Dendritic cell treated with granulocyte-macrophage colony-stimulating factor and Interleukin-4, amounts not matched to agents 40 ng/mL and 50 ng/mL, for 4 days (primary cell): ENCODE measurements at regions of chr9 and their contacts with region 1.

Region 1: DNA sequence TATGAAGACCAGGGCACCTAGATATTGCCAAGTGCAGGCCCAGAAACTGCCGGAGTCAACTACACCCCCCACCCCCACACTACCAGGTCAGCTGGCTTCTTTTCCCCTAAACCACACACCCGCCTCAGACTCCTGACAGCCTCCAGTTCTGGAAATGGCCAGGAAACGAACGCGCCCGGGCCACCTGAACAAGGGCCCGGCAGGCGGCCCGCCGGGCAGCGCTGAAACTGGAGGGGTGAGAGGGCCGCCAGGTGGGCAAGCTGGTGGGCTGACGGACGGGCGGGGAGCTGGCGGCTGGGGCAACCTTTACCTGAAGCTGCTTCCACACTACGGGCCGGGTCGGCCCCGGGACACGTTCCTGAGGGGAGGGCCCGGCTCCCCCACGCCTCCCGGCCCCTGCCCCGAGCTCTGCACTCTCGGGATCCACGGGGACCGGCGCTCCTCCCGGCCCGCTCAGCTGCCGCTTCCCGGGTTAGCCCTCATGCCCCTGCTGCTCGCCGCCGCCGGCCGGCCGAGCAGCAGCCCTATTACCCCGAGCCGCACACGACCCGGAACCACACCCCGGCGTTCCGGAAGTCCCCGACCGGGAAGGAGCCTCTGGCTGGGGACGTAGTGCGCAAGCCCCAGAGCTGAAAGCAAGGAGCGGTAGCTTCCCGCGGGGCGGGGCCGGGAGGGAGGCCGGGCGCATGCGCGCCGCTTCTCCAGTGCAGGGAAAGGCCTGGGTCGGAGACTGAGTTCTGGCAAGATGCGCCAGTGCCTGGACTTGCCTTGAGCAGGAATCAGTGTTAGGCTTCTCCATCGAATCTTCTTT is at the start of gene MAPKAP1:
- H3K4me3 Mint-ChIP-seq: peak within 1 kb of the TSS; percentile 86
- H3K27ac Mint-ChIP-seq: peak within 1 kb of the TSS; percentile 90
- H3K4me1 Mint-ChIP-seq: peaks cover 42% of the 10 kb centered on the region
- H3K27me3 Mint-ChIP-seq: no peaks in the 10 kb centered on the region

Region 2: GRCh38 chr9:125746017-125746773 is 39.3 kb after region 1 on chr9:
- intact Hi-C with region 1: loop called (anchors 1 kb)
- H3K4me3 Mint-ChIP-seq: peak overlapping the region; percentile 88
- H3K27ac Mint-ChIP-seq: peak overlapping the region; percentile 88
- H3K4me1 Mint-ChIP-seq: peaks cover 39% of the 10 kb centered on the region
- H3K27me3 Mint-ChIP-seq: peaks cover 7% of the 10 kb centered on the region

Region 3: GRCh38 chr9:125815568-125815967 is 108.7 kb after region 1 on chr9:
- intact Hi-C with region 1: no loop called
- H3K4me3 Mint-ChIP-seq: no peak overlapping the region
- H3K27ac Mint-ChIP-seq: no peak overlapping the region
- H3K4me1 Mint-ChIP-seq: no peaks in the 10 kb centered on the region
- H3K27me3 Mint-ChIP-seq: no peaks in the 10 kb centered on the region

Region 4: DNA sequence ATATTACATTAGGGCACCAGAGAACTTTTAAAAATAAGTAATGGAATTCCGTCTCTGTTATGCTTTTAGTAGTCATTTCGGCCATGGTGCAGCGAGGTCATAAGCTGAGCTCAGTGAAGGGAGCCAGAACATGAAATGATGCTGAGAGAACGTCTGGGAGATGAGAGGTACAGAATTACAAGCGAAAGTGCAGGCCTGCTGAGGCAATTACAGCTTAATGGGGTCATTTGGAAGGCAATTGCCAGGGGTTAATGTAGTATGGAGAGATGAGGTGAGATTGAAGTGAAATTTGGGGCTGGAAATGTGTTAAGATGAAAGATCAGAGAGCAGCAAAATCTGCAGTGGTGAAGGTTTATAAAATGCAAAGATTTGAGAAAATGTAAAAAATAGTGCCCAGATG is 136.8 kb after region 1 on chr9:
- intact Hi-C with region 1: no loop called
- H3K4me3 Mint-ChIP-seq: no peak overlapping the region
- H3K27ac Mint-ChIP-seq: no peak overlapping the region
- H3K4me1 Mint-ChIP-seq: peaks cover 45% of the 10 kb centered on the region
- H3K27me3 Mint-ChIP-seq: no peaks in the 10 kb centered on the region